Natural killer cell (primary cell): ENCODE measurements at regions of chr11 and their contacts with region 1.

Region 1: DNA sequence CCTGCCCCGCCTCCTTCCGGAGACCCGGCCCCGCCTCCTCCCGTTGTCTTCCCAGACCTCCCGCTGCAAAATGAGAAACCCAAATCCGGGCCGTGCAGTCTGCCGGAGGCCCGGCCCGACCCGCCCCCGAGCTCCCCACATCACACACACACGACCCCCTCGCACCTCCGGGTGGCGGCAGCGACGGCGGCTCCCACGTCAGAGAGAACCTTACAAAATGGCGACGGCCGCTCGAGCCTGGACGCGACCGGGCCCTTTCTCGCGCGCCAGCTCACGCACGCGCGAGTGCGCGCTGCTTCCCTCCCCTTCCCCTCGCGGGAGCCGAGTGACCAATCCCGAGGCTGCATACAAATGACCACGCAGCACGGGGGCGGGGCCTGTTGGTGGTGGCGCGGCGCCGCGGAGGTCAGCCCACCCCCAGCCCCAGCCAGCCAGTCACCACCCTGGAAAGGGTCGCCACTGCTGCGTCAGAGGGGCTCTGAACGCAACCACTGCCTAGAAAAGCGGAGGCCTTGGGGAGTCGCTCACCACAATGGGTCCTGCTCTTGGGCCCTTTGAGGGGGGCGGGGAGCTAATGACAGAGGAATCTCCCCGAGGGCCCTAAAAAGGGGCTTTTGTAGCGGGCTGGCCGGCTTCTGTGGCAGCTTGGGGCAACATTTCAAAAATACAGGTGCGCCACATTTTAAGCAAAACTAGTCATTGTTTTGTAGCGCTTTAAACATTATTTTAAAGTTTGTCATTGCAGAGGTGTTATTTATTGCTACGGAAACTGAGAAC is at the start of gene RBM4B:
- DNase-seq: peak; percentile 96 to 98
- ATAC-seq: peak; percentile 87 to 97 (median 88)
- H3K4me3 ChIP-seq: peak within 1 kb of the TSS; percentile 84
- H3K4me3 Mint-ChIP-seq: peak within 1 kb of the TSS; percentile 98
- H3K27ac ChIP-seq: peak within 1 kb of the TSS; percentile 95
- H3K27ac Mint-ChIP-seq: peak within 1 kb of the TSS; percentile 98 to 100
- H3K4me1 ChIP-seq: peaks cover 22% of the 10 kb centered on the region
- H3K4me1 Mint-ChIP-seq: peaks cover 28 to 42% of the 10 kb centered on the region in 2 donors
- H3K27me3 ChIP-seq: no peaks in the 10 kb centered on the region
- H3K27me3 Mint-ChIP-seq: no peaks in the 10 kb centered on the region
- CTCF ChIP-seq: no peak
- total RNA-seq, gene RBM4B: 11.1 to 23.0 (median 12.4) TPM

Region 2: DNA sequence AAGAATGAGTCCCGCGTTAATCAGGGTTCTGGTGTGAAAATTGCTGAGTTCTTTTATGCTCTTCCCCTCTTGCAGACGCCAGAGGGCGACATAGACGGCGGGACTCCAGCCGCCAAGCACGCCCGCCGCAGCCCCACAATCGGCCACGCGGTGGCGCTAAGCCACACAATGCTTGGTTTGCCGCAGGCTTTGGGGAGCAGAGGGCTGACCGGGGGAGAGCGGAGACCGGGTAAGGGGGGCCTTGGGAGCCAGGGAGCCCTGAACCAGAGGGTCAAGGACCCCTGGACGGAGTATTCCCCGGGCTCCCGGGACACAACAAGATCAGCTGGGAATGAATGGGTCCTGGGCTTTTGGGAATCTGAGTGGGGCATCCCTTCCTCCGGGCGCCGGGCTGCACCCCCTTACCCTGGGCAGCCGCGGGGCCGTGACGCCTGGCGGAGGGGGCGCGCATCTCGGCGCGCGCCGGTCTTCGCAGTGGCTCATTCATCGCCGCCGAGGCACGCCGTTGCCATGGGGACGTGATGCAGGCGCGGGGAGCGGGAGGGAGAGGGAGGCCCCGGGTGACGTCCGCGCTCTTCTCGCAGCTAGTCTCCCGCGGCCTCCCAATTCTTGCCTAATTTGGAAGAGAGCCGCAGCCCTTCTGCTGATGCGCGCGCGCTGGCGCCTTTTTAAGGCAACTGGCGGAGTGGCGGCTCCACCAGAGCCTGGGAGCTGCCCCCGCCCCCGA is 269.1 kb before region 1 on chr11:
- intact Hi-C with region 1: loop called (anchors 1 kb)
- DNase-seq: peak; percentile 96 to 97
- ATAC-seq: peak; percentile 93 to 96 (median 94)
- H3K4me3 ChIP-seq: no peak overlapping the region
- H3K4me3 Mint-ChIP-seq: peak overlapping the region; percentile 87
- H3K27ac ChIP-seq: no peak overlapping the region
- H3K27ac Mint-ChIP-seq: peak overlapping the region; percentile 18 to 66
- H3K4me1 ChIP-seq: peaks cover 6% of the 10 kb centered on the region
- H3K4me1 Mint-ChIP-seq: peaks cover 5 to 6% of the 10 kb centered on the region in 2 donors
- H3K27me3 ChIP-seq: no peaks in the 10 kb centered on the region
- H3K27me3 Mint-ChIP-seq: peaks cover 34 to 41% of the 10 kb centered on the region in 2 donors
- CTCF ChIP-seq: peak; percentile 100

Region 3: DNA sequence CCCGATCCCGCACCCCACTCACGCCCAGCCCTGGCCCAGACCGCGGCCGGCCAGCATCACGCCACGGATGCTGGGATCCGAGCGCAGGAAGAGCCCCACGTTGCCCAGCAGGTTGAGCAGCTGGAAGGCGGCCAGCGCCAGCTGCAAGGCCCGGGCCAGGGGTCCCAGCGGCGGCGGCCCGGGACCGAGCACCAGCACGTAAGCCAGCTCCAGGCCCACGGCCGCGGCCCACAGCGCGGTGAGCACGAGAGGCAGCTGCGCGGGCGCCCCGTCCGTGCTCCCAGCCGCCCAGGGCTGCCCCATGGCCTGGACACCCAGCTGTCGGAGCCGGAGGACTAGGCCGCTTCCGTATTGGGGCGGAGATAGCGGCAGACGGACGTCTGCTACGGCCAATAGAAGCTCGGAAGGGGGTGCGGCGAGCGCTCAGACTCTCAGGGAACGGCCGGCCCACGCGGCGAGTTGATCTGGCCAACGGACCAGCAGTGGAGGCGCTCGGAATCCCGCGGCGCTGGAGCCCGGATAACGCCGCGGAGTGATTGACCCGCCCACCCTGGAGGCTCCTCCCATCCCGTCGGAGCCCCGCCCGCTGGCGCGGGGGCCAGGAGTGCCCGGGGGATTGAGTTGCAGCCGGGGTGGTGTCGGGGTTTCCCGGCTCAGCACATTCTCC is 132.0 kb before region 1 on chr11 and contains the start of gene ZDHHC24:
- intact Hi-C with region 1: loop called (anchors 1 kb)
- DNase-seq: peak; percentile 84 to 92
- ATAC-seq: peak; percentile 79 to 88 (median 80)
- H3K4me3 ChIP-seq: peak within 1 kb of the TSS; percentile 78
- H3K4me3 Mint-ChIP-seq: peak within 1 kb of the TSS; percentile 91
- H3K27ac ChIP-seq: peak within 1 kb of the TSS; percentile 90
- H3K27ac Mint-ChIP-seq: peak within 1 kb of the TSS; percentile 91 to 92
- H3K4me1 ChIP-seq: peaks cover 43% of the 10 kb centered on the region
- H3K4me1 Mint-ChIP-seq: peaks cover 41 to 52% of the 10 kb centered on the region in 2 donors
- H3K27me3 ChIP-seq: no peaks in the 10 kb centered on the region
- H3K27me3 Mint-ChIP-seq: peaks cover 0 to 9% of the 10 kb centered on the region in 2 donors
- CTCF ChIP-seq: no peak
- total RNA-seq, gene ZDHHC24: 18.5 to 34.9 (median 28.9) TPM

Region 4: DNA sequence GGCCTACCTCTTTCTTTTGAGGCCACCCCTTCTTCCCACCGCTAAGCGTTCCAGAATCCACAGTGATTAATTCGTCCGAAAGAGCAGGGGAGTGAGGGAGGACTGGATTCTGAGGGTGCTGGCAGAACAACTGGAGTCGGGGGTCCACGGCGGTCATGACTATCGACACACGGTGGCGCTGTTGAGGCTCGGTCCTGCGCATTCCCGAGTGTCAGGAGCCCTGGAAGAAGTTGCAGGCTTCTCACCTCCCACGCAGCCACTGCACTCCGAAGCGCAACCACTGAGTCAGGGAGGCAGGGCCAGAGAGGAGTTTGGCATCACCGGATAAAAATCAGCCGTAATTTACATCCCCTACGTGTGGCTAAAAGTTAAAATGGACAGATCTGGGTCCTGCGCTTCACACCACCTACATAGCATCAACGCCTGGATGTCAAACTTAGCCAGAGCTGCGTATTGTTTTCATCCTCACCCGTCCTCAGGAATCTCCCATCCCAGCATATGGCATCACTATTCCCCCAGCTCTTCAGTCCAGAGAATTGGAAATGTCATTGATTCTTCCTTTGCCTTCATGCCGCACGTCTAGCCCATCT is 98.7 kb before region 1 on chr11:
- intact Hi-C with region 1: loop called (anchors 1 kb)
- DNase-seq: peak; percentile 70 to 88
- ATAC-seq: peak; percentile 77 to 91 (median 84)
- H3K4me3 ChIP-seq: no peak overlapping the region
- H3K4me3 Mint-ChIP-seq: no peak overlapping the region
- H3K27ac ChIP-seq: no peak overlapping the region
- H3K27ac Mint-ChIP-seq: peak overlapping the region in 1 of 2 donors; percentile 29
- H3K4me1 ChIP-seq: peaks cover 6% of the 10 kb centered on the region
- H3K4me1 Mint-ChIP-seq: peaks cover 0 to 11% of the 10 kb centered on the region in 2 donors
- H3K27me3 ChIP-seq: no peaks in the 10 kb centered on the region
- H3K27me3 Mint-ChIP-seq: peaks cover 16 to 23% of the 10 kb centered on the region in 2 donors
- CTCF ChIP-seq: peak; percentile 83

Region 5: DNA sequence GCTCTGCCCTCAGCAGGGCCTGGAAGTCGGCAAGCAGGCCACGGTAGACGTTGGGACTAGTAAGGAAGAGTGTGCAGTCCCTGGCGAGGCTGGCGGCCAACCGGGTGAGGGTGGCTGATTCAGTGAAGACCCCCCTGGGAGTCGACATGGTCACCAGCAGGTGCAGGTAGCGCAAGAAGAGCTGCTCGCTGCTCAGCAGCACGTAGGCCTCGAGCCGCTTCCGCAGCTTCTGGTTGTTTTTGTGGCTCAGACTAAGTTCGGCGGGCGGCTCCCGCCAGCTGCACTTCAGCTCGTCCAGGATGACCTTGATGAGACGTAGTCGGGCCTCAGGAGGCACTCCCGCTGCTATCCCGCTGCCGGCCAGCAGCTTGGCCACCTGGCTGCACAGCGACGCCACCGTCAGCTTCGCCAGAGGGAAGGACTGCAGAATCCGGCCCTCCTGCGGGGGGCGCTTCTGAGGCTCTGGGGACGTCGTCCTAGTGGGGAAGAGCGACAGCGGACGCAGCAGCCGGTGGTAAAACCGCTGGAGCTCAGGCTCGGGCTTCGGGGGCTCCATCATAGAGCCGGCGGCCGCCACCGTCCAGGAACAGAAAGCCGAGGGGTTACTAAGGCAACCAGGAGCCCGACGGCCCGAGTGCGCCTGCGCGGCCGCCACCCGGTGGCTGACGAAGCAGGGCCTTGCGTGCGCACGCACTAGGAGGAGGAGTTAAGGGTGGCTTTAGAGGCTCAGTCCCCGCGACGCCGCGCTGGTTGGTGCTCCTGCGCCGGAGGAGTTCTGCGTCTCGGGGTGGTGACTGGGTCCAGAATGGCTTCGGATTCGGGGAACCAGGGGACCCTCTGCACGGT is 85.1 kb before region 1 on chr11 and contains the starts of genes CCDC87 and CCS:
- intact Hi-C with region 1: loop called (anchors 1 kb)
- DNase-seq: peak; percentile 98 to 99
- ATAC-seq: peak; percentile 96 to 97 (median 96)
- H3K4me3 ChIP-seq: peak within 1 kb of the TSS; percentile 52
- H3K4me3 Mint-ChIP-seq: peak within 1 kb of the TSS; percentile 100
- H3K27ac ChIP-seq: peak within 1 kb of the TSS; percentile 63
- H3K27ac Mint-ChIP-seq: peak within 1 kb of the TSS; percentile 98 to 100
- H3K4me1 ChIP-seq: peaks cover 20% of the 10 kb centered on the region
- H3K4me1 Mint-ChIP-seq: peaks cover 31 to 33% of the 10 kb centered on the region in 2 donors
- H3K27me3 ChIP-seq: no peaks in the 10 kb centered on the region
- H3K27me3 Mint-ChIP-seq: no peaks in the 10 kb centered on the region
- CTCF ChIP-seq: peak; percentile 72
- total RNA-seq, gene CCDC87: 0.40 to 0.68 (median 0.49) TPM
- total RNA-seq, gene CCS: 27.1 to 35.6 (median 32.4) TPM

Region 6: GRCh38 chr11:66616379-66617154 is 61.2 kb before region 1 on chr11 and contains the start of gene RBM14:
- intact Hi-C with region 1: loop called (anchors 1 kb)
- DNase-seq: peak; percentile 99
- ATAC-seq: peak; percentile 79 to 94 (median 86)
- H3K4me3 ChIP-seq: peak within 1 kb of the TSS; percentile 94
- H3K4me3 Mint-ChIP-seq: peak within 1 kb of the TSS; percentile 99
- H3K27ac ChIP-seq: peak within 1 kb of the TSS; percentile 95
- H3K27ac Mint-ChIP-seq: peak within 1 kb of the TSS; percentile 99 to 100
- H3K4me1 ChIP-seq: peaks cover 47% of the 10 kb centered on the region
- H3K4me1 Mint-ChIP-seq: peaks cover 45 to 46% of the 10 kb centered on the region in 2 donors
- H3K27me3 ChIP-seq: no peaks in the 10 kb centered on the region
- H3K27me3 Mint-ChIP-seq: no peaks in the 10 kb centered on the region
- CTCF ChIP-seq: no peak
- total RNA-seq, gene RBM14: 289 to 325 (median 307) TPM

Region 7: DNA sequence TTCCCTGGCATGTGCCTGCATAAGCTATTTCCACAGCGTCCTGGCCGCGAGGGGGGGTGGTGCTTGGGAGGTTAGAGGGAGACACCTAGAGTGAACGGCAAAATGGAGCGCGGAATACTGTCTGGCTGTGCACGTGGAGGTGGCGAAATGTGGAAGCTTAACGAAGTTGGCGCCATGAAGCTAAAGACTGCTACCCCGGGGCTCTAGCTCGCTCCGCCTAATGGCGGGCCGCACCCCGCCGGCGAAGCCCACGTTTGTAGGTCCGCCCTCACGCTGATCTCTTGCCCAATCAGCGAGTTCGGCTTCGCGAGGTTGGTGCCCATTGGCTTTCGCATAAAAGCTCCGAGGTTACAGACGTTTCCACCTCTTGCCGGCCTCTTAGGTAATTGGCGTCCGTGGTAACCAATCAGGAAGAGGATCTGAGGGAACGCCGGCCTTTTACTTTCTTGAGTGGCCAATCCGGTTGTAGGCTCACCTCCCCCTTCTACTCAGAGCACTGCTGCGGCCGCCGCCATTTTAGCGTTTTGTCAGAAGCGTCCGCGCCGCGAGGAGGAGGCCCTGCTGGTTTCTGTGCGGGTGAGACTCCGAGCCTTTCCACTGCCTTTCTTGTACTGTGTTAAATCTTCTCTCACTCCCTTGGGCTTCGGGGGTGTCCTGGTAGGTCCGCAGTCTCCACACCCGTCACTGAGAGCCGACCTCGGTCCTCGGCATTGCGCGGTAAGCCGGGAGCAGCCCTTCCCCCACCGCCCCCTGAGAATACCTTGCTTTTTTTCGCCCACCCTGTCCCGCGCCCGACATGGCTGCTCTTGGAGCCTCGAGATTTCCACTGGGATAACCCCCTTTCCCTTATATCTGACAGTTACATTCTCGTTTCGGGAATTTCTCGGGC is 39.4 kb before region 1 on chr11 and contains the start of gene RBM4:
- intact Hi-C with region 1: loop called (anchors 1 kb)
- DNase-seq: peak; percentile 91 to 100
- ATAC-seq: peak; percentile 89 to 98 (median 91)
- H3K4me3 ChIP-seq: peak within 1 kb of the TSS; percentile 73
- H3K4me3 Mint-ChIP-seq: peak within 1 kb of the TSS; percentile 92
- H3K27ac ChIP-seq: peak within 1 kb of the TSS; percentile 81
- H3K27ac Mint-ChIP-seq: peak within 1 kb of the TSS; percentile 88 to 96
- H3K4me1 ChIP-seq: peaks cover 35% of the 10 kb centered on the region
- H3K4me1 Mint-ChIP-seq: peaks cover 57 to 66% of the 10 kb centered on the region in 2 donors
- H3K27me3 ChIP-seq: no peaks in the 10 kb centered on the region
- H3K27me3 Mint-ChIP-seq: no peaks in the 10 kb centered on the region
- CTCF ChIP-seq: no peak
- total RNA-seq, gene RBM4: 219 to 241 (median 224) TPM